ENCODE measurements at regions of chr7 and their contacts with region 1.

Region 1: DNA sequence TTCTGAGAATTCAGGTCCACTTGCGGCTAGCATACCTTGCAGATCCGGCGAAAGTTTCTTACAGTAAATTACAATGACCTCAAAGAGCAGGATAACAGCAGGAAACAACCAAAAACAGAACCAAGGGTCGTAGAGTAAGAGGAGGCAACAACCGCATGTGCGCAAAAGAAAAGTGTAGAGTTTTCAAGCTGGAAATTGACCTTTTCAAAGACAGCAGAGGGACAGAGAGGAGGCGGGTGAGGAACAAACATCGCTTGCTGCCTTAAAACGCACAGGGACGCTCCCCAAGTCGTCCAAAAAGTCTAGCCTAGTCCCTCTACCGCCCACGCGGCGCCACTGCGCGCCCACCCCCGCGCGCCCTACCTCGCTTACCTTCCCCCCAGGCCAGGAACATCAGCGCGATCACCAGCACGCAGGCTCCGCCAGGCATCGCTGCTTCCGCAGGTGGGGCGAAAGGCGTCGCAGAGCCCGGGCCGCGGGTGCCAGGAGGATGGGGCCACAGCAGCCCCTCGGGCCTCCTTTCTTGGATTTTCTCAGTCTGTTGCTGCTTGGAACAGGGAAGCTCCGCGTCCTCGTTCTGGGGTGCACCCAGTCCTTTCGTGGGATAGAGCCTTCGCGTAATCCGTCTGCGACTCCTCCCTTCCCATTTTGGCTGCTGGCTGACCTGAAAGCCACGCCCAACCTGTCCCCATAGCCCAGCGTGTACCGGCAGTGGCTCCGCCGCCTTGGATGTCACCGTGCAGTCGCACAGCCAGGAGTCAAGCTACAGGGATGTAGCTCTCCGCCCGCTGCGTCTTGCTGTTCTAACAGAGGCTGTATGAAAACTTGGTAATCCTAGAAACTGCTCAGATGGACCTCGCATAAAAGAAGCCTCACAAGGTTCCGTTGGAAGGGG is at the start of gene VWDE:
- DNase-seq: peak; percentile 83 to 88
- H3K4me3 ChIP-seq: peak within 1 kb of the TSS; percentile 97
- H3K27ac ChIP-seq: peak within 1 kb of the TSS; percentile 66
- H3K4me1 ChIP-seq: peaks cover 30% of the 10 kb centered on the region
- H3K27me3 ChIP-seq: no peaks in the 10 kb centered on the region
- CTCF ChIP-seq: no peak; the same call in 1 of the 2 replicates
- total RNA-seq, gene VWDE: 27.3 and 28.8 TPM in 2 replicates

Region 2: DNA sequence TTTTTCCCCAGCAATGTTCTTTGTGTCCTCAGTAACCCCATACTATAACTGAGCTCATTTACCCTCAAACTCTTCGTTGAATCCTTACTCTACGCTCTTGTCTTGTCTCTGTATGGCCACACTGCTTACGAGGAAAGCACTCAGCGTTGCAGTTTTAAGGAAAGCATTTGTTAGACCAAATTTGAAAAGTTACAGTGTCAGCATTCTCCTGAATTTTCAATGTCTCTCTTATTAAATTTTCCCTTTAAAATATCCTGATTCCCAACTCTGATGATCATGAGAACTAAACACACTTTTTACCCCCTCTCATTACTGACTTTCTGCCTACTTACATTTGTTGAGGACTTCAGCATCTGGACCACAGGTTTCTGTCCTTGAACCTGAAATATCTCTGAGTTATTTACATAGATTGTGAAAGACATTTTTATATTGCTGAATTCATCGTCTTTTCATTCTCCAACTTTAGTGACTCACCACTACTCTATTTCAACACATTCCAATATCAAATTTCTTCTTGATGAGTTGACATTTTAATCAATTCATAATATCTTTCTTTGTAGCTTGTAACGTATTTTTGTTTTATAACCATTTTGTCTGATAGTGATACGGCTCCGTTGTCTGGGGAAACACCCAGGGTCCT is 19.9 kb after region 1 on chr7:
- CTCF ChIA-PET with region 1: no interaction called
- POLR2A ChIA-PET with region 1: interaction called, 3 read pairs
- intact Hi-C with region 1: loop called (anchors 1 kb)
- DNase-seq: peak in 1 of 2 experiments; percentile 91
- H3K4me3 ChIP-seq: peak overlapping the region; percentile 39; the same call in 1 of the 2 replicates
- H3K27ac ChIP-seq: peak overlapping the region; percentile 86
- H3K4me1 ChIP-seq: peaks cover 37% of the 10 kb centered on the region
- H3K27me3 ChIP-seq: no peaks in the 10 kb centered on the region
- CTCF ChIP-seq: no peak

Region 3: GRCh38 chr7:13067036-13067435 is 663.5 kb after region 1 on chr7:
- CTCF ChIA-PET with region 1: no interaction called
- POLR2A ChIA-PET with region 1: no interaction called
- intact Hi-C with region 1: no loop called
- DNase-seq: no peak
- H3K4me3 ChIP-seq: no peak overlapping the region
- H3K27ac ChIP-seq: no peak overlapping the region
- H3K4me1 ChIP-seq: no peaks in the 10 kb centered on the region
- H3K27me3 ChIP-seq: no peaks in the 10 kb centered on the region
- CTCF ChIP-seq: no peak